ENCODE measurements at regions of chr14 and their contacts with region 1.

Region 1: DNA sequence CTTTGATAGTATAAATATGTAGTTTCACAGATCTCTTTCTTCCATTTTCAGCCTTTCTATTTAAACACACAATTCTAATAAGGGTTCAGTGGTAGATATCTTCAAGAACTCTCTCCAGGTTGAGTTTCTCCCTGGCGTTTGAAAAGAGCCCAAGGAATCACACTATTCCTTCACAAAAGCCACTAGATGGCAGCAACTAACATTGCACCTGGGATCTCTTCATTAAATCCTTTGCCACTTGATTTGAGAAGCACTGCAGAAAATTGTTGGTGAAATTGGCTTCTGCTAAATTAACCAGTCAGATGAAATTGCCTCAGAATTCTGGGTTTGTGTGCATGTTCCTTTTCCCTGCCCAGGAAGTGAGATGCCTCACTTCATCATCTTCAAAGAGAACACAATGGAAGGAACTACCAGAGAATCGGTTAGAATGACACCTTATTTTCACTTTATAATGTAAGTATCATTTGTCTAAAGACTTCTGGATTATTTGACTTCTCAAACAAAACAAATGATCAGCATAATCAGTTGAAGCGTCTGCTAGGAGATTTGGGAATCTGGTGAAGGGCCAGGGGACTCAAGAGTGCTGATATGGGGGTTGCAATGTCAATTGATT is 6.8 kb downstream of the CCDC198 start:
- DNase-seq: peak in 1 of 2 experiments; percentile 34
- H3K4me3 ChIP-seq: no peak overlapping the region
- H3K4me3 Mint-ChIP-seq: no peak overlapping the region
- H3K27ac Mint-ChIP-seq: no peak overlapping the region
- H3K4me1 ChIP-seq: no peaks in the 10 kb centered on the region
- H3K4me1 Mint-ChIP-seq: no peaks in the 10 kb centered on the region
- H3K27me3 ChIP-seq: no peaks in the 10 kb centered on the region
- H3K27me3 Mint-ChIP-seq: no peaks in the 10 kb centered on the region
- CTCF ChIP-seq: peak; percentile 36 to 75

Region 2: GRCh38 chr14:57533214-57533613 is 46.3 kb after region 1 on chr14:
- CTCF ChIA-PET with region 1: no interaction called
- POLR2A ChIA-PET with region 1: no interaction called
- intact Hi-C with region 1: loop called (anchors 5 kb)
- DNase-seq: peak in 1 of 2 experiments; percentile 35
- H3K4me3 ChIP-seq: no peak overlapping the region
- H3K4me3 Mint-ChIP-seq: no peak overlapping the region
- H3K27ac Mint-ChIP-seq: no peak overlapping the region
- H3K4me1 ChIP-seq: no peaks in the 10 kb centered on the region
- H3K4me1 Mint-ChIP-seq: no peaks in the 10 kb centered on the region
- H3K27me3 ChIP-seq: no peaks in the 10 kb centered on the region
- H3K27me3 Mint-ChIP-seq: peaks cover 4% of the 10 kb centered on the region
- CTCF ChIP-seq: peak in 1 of 2 experiments; percentile 26

Region 3: DNA sequence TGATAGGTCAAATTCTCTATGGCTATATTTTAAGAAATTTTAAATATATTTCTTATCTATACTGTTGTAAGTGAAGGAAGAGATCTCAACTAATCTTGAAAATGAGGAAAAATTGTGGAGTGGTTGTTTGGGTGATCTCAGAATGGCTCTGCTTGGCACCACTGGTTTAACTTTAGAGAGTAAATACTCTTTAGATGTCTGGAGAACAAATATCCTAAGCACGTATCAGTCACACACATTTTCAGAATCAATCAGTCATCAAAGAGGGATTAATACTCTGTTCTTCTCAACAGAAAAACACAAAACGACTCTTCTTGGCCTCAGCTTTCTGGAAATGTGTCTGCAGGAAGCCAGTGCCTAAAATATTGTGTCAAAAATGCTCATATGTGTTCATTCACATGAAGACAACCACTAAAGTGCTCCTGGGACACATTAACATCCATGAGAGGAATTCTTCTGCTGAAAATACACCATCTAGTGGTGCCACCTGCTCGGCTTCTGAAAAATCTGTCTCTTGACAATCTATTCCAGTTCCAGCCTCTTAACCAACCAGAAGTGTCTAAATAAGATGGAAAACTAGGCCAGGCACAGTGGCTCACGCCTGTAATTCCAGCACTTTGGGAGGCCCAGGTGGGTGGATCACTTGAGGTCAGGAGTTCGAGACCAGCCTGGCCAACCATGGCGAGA is 87.9 kb after region 1 on chr14:
- CTCF ChIA-PET with region 1: no interaction called
- POLR2A ChIA-PET with region 1: no interaction called
- intact Hi-C with region 1: loop called (anchors 1 kb)
- DNase-seq: peak in 1 of 2 experiments; percentile 7
- H3K4me3 ChIP-seq: no peak overlapping the region
- H3K4me3 Mint-ChIP-seq: no peak overlapping the region
- H3K27ac Mint-ChIP-seq: no peak overlapping the region
- H3K4me1 ChIP-seq: no peaks in the 10 kb centered on the region
- H3K4me1 Mint-ChIP-seq: no peaks in the 10 kb centered on the region
- H3K27me3 ChIP-seq: no peaks in the 10 kb centered on the region
- H3K27me3 Mint-ChIP-seq: peaks cover 2% of the 10 kb centered on the region
- CTCF ChIP-seq: peak in 1 of 2 experiments; percentile 38

Region 4: DNA sequence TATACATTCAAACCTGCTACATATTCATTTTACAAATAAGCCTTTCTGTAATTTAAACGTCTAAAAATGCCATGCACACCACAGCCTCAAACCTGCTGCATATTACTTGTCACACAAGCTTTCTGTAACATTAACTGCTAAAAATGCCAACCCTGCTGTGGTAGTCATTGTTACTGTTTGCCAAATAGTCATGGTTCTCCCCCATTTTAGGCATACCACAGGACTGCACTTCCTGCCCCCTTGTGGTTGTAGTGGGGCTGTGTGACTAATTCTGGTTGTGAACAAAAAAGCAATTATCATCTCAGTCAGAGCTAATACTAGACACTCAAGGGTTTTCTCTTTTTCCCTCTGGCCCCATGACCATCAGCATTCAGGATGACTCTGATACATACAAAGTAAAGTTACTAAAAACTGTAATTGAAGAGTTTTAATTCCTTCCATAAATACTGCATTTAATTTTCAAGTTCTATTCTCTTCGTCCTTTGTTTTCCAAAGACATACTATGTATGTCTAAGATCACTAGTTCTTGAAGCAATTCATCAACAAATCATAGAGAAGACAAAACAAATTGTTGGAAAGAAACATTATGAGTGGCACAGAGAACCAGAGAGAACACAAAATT is 384.7 kb after region 1 on chr14:
- CTCF ChIA-PET with region 1: no interaction called
- POLR2A ChIA-PET with region 1: no interaction called
- intact Hi-C with region 1: loop called (anchors 2 kb)
- DNase-seq: peak in 1 of 2 experiments; percentile 37
- H3K4me3 ChIP-seq: no peak overlapping the region
- H3K4me3 Mint-ChIP-seq: no peak overlapping the region
- H3K27ac Mint-ChIP-seq: no peak overlapping the region
- H3K4me1 ChIP-seq: no peaks in the 10 kb centered on the region
- H3K4me1 Mint-ChIP-seq: peaks cover 7% of the 10 kb centered on the region
- H3K27me3 ChIP-seq: no peaks in the 10 kb centered on the region
- H3K27me3 Mint-ChIP-seq: peaks cover 11% of the 10 kb centered on the region
- CTCF ChIP-seq: peak; percentile 44 to 62

Region 5: DNA sequence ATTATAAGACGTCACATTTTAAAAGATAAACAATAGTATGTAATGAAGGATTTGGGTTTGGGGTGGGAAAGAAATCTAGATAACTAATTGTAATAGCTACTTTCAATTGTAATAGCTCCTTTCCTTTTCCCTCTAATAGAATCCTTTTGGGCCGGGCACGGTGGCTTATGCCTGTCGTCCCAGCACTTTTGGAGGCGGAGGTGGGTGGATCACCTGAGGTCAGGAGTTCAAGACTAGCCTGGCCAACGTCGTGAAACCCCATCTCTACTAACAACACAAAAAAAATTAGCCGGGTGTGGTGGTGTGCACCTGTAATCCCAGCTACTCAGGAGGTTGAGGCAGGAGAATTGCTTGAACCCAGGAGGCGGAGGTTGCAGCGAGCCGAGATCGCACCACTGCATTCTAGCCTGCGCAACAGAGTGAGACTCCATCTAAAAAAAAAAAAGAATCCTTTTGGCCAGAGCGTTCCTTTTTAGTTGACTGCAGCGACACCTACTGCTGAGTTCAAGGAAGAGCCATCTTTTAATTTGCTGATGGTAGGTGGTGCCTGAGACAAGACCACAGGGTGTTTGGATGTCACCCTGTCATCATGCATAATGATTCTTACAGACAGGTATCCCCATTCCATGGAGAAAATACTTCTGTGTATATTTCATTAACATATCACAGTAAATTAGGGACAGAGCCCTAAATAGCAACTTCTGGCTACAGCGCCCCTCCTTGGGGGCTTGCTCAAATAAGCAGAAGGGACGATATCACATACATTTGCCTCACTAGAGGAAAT is 585.6 kb after region 1 on chr14:
- CTCF ChIA-PET with region 1: no interaction called
- POLR2A ChIA-PET with region 1: no interaction called
- intact Hi-C with region 1: loop called (anchors 2 kb)
- DNase-seq: peak; percentile 59 to 68
- H3K4me3 ChIP-seq: no peak overlapping the region
- H3K4me3 Mint-ChIP-seq: no peak overlapping the region
- H3K27ac Mint-ChIP-seq: no peak overlapping the region
- H3K4me1 ChIP-seq: no peaks in the 10 kb centered on the region
- H3K4me1 Mint-ChIP-seq: no peaks in the 10 kb centered on the region
- H3K27me3 ChIP-seq: no peaks in the 10 kb centered on the region
- H3K27me3 Mint-ChIP-seq: peaks cover 9% of the 10 kb centered on the region
- CTCF ChIP-seq: peak; percentile 64 to 74

Measured in Caco-2 (cell line).